Activated CD4-positive, alpha-beta T cell treated with anti-CD3 and anti-CD28 coated beads for 36 hours (primary cell): ENCODE measurements at regions of chr7 and their contacts with region 1.

Region 1: GRCh38 chr7:2863461-2864066 is 19.5 kb upstream of the GNA12 start:
- DNase-seq: peak; percentile 88
- ATAC-seq: peak; percentile 98
- H3K4me3 Mint-ChIP-seq: peak overlapping the region; percentile 66
- H3K27ac Mint-ChIP-seq: peak overlapping the region; percentile 95
- H3K4me1 Mint-ChIP-seq: peaks cover 28% of the 10 kb centered on the region
- H3K27me3 Mint-ChIP-seq: no peaks in the 10 kb centered on the region

Region 2: GRCh38 chr7:2529161-2530070 is 334.1 kb before region 1 on chr7:
- CTCF ChIA-PET with region 1: no interaction called
- POLR2A ChIA-PET with region 1: no interaction called
- intact Hi-C with region 1: no loop called
- DNase-seq: peak; percentile 79
- ATAC-seq: peak; percentile 58
- H3K4me3 Mint-ChIP-seq: peak overlapping the region; percentile 61
- H3K27ac Mint-ChIP-seq: peak overlapping the region; percentile 94
- H3K4me1 Mint-ChIP-seq: peaks cover 47% of the 10 kb centered on the region
- H3K27me3 Mint-ChIP-seq: no peaks in the 10 kb centered on the region

Region 3: DNA sequence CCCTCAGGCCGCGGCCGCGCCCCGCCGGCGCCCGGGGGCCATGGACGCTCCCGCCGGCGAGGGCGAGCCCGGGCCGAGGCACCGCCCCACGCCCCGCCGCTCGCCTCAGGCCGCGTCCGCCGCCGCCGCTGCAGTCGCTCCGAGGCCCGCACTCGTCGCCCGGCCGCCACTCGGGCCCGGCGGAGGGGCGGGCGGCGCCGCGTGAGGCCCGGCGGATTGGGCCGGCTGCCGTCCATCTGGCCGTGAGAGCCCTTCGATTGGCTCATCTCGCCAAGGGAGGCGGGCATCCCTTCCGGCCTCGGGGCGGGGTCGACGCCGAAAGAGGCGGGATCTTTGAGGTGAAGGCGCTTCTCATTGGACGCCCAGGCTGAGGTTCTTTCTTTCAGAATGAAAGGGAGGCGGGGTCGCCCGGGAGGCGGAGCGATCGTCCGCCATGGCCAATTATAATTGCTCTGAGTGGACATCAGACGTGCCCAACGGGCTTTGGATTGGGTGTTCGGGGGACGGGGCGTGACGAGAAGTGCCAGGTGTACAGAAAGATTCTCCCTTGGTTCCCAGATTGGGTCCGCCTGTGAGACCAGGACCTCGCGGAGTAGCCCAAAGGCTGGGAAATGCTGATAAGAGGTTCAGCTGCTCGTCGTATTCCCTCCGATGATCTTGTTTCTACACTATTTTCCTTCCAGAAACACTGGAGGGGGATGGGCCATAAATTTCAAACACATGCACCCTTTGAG is 19.2 kb before region 1 on chr7 and contains the start of gene GNA12:
- CTCF ChIA-PET with region 1: interaction called, 6 read pairs
- POLR2A ChIA-PET with region 1: no interaction called
- intact Hi-C with region 1: loop called in 1 of 2 experiments (anchors 1 kb)
- DNase-seq: peak; percentile 99
- ATAC-seq: peak; percentile 96
- H3K4me3 Mint-ChIP-seq: peak within 1 kb of the TSS; percentile 75
- H3K27ac Mint-ChIP-seq: peak within 1 kb of the TSS; percentile 44
- H3K4me1 Mint-ChIP-seq: peaks cover 23% of the 10 kb centered on the region
- H3K27me3 Mint-ChIP-seq: no peaks in the 10 kb centered on the region
- total RNA-seq, gene GNA12: 19.5 to 22.6 TPM

Region 4: DNA sequence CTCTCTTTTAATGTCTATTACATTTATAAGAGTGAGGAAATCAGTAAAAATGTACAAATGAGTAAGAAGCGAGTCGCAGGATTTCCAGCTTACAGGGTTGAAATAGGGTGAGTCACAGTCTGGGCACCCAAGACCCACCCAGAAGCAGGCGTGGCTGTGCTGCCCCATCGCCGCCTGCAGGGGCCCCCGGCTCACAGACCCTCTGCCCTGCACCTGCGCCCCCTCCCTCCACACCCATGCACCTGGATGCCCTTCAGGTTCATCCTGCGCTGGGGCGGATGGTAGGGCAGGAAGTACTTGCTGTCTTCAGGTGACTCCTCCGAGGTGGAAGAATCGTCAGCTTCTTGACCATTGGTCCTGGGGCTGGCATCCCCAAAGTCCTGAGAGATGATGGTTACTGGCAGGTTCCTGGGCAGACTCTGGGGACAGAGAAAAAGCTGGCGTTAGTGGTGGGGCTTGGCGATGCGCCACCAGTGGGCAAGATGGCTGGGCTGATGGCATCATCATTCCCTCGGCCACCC is 70.7 kb after region 1 on chr7:
- CTCF ChIA-PET with region 1: no interaction called
- POLR2A ChIA-PET with region 1: no interaction called
- intact Hi-C with region 1: loop called in 1 of 2 experiments (anchors 2 kb)
- DNase-seq: peak; percentile 82
- ATAC-seq: peak; percentile 98
- H3K4me3 Mint-ChIP-seq: peak overlapping the region; percentile 43
- H3K27ac Mint-ChIP-seq: peak overlapping the region; percentile 100
- H3K4me1 Mint-ChIP-seq: peaks cover 20% of the 10 kb centered on the region
- H3K27me3 Mint-ChIP-seq: no peaks in the 10 kb centered on the region

Region 5: GRCh38 chr7:3042861-3043489 is 179.4 kb after region 1 on chr7:
- CTCF ChIA-PET with region 1: interaction called, 3 read pairs
- POLR2A ChIA-PET with region 1: no interaction called
- intact Hi-C with region 1: loop called (anchors 2 to 10 kb)
- DNase-seq: peak; percentile 86
- ATAC-seq: peak; percentile 80
- H3K4me3 Mint-ChIP-seq: peak overlapping the region; percentile 97
- H3K27ac Mint-ChIP-seq: peak overlapping the region; percentile 97
- H3K4me1 Mint-ChIP-seq: peaks cover 55% of the 10 kb centered on the region
- H3K27me3 Mint-ChIP-seq: no peaks in the 10 kb centered on the region

Region 6: DNA sequence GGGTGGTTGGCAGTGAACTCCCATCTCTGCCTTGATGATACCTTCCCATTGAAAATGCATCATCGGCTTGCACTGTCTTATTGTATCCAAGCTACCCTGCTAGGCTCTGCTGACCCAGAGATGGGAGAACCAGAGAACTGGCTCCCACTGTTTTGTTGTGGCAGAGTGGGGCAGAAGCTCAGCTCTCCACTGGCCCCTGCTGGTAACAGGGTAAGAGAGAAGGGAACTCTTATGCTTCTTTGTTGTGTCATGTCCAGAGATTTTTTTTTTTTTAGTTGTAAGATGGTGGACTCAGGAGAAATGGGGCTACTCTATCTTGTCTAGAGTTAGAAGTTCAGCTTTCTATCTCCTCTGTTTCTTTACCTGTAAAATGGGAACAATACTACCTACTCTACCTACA is 336.9 kb after region 1 on chr7:
- CTCF ChIA-PET with region 1: interaction called, 3 read pairs
- POLR2A ChIA-PET with region 1: interaction called, 3 read pairs
- intact Hi-C with region 1: loop called (anchors 1 to 5 kb)
- DNase-seq: peak; percentile 63
- ATAC-seq: peak; percentile 58
- H3K4me3 Mint-ChIP-seq: no peak overlapping the region
- H3K27ac Mint-ChIP-seq: no peak overlapping the region
- H3K4me1 Mint-ChIP-seq: no peaks in the 10 kb centered on the region
- H3K27me3 Mint-ChIP-seq: peaks cover 6% of the 10 kb centered on the region

Region 7: GRCh38 chr7:3673524-3673923 is 810.0 kb after region 1 on chr7:
- CTCF ChIA-PET with region 1: interaction called, 4 read pairs
- POLR2A ChIA-PET with region 1: no interaction called
- intact Hi-C with region 1: loop called (anchors 5 to 10 kb)
- DNase-seq: peak; percentile 77
- ATAC-seq: no peak
- H3K4me3 Mint-ChIP-seq: no peak overlapping the region
- H3K27ac Mint-ChIP-seq: no peak overlapping the region
- H3K4me1 Mint-ChIP-seq: peaks cover 2% of the 10 kb centered on the region
- H3K27me3 Mint-ChIP-seq: no peaks in the 10 kb centered on the region